ENCODE measurements at regions of chr12 and their contacts with region 1.

Region 1: DNA sequence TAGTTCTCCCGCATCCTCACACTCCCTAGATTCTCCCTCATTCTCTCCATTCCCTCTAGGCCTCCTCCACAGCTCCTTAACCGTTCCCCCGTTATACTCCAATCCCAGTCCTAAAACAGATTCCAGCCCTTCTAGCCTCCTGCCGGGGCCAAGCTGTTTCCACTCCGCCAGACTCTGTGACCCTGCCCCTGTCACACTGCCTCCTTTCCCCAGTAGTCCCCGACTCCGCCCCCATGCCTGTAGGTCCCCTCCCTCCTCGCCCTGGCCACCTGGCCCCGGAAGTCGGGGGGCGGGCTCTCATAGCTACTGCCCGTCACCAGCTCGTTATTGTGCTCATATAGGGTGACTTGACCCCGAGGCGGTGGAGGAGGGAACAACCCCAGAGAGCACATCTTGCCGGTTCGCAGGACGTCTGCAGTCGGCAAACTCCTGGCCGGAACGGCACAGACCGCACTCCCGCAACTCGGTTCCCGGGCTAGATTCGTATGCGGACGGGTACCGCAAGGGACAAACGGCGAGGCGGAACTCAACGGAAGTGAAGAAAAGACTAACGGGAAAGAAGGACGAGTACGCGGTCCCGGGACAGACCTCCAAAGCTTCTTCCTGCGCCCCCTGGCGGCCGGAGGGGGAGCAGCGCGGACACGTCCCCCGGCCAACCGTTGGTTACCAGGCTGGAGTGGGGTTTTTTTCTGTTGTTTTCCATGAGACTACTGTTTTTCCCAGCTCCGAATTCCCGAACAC is at the start of gene AAAS:
- H3K4me3 ChIP-seq: peak within 1 kb of the TSS; percentile 97
- H3K27ac ChIP-seq: peak within 1 kb of the TSS; percentile 82
- H3K4me1 ChIP-seq: no peaks in the 10 kb centered on the region
- CTCF ChIP-seq: peak; percentile 96

Region 2: GRCh38 chr12:53267999-53268647 is 53.1 kb before region 1 on chr12 and contains the start of gene ESPL1:
- CTCF ChIA-PET with region 1: interaction called, 18 read pairs
- POLR2A ChIA-PET with region 1: no interaction called
- H3K4me3 ChIP-seq: peak within 1 kb of the TSS; percentile 74
- H3K27ac ChIP-seq: peak within 1 kb of the TSS; percentile 75; the same call in 1 of the 2 replicates
- H3K4me1 ChIP-seq: peaks cover 5% of the 10 kb centered on the region; the same call in 1 of the 2 replicates
- CTCF ChIP-seq: peak; percentile 73

Region 3: DNA sequence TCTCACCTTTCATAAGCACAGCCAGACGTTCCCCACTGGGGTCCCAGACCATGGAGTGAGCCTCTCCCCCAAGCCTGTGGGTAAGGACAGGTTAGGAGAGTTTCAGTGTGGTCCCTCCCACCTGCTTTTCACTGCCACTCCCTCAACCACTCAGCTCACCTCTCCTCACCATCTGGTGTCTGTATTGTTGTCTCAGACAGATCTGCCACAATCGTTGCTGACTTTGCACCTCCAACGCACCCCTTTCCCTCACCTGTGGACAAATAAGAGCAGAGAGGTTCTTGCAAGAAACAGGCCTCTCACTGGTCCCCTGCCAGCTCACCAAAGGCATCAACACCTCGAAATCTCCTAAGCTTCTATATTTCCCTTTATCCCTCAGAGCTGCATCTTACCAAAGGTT is 13.0 kb before region 1 on chr12:
- CTCF ChIA-PET with region 1: interaction called, 34 read pairs
- POLR2A ChIA-PET with region 1: interaction called, 5 read pairs
- H3K4me3 ChIP-seq: no peak overlapping the region
- H3K27ac ChIP-seq: no peak overlapping the region
- H3K4me1 ChIP-seq: no peaks in the 10 kb centered on the region
- CTCF ChIP-seq: no peak

Region 4: GRCh38 chr12:53379389-53380103 is 58.3 kb after region 1 on chr12:
- CTCF ChIA-PET with region 1: interaction called, 15 read pairs
- POLR2A ChIA-PET with region 1: interaction called, 18 read pairs
- H3K4me3 ChIP-seq: peak overlapping the region; percentile 70
- H3K27ac ChIP-seq: peak overlapping the region; percentile 95
- H3K4me1 ChIP-seq: peaks cover 17% of the 10 kb centered on the region
- CTCF ChIP-seq: no peak

Region 5: GRCh38 chr12:53476769-53477209 is 155.5 kb after region 1 on chr12:
- CTCF ChIA-PET with region 1: interaction called, 12 read pairs
- POLR2A ChIA-PET with region 1: interaction called, 3 read pairs
- H3K4me3 ChIP-seq: no peak overlapping the region
- H3K27ac ChIP-seq: no peak overlapping the region
- H3K4me1 ChIP-seq: no peaks in the 10 kb centered on the region
- CTCF ChIP-seq: no peak